Natural killer cell (primary cell): ENCODE measurements at regions of chr4 and their contacts with region 1.

Region 1: GRCh38 chr4:153573881-153574802 is 108.0 kb downstream of the TMEM131L start:
- DNase-seq: peak; percentile 42 to 82
- ATAC-seq: peak; percentile 86 to 96 (median 95)
- H3K4me3 ChIP-seq: no peak overlapping the region
- H3K4me3 Mint-ChIP-seq: no peak overlapping the region
- H3K27ac ChIP-seq: peak overlapping the region; percentile 44
- H3K27ac Mint-ChIP-seq: peak overlapping the region; percentile 25 to 71
- H3K4me1 ChIP-seq: peaks cover 15% of the 10 kb centered on the region
- H3K4me1 Mint-ChIP-seq: peaks cover 38 to 52% of the 10 kb centered on the region in 2 donors
- H3K27me3 ChIP-seq: no peaks in the 10 kb centered on the region
- H3K27me3 Mint-ChIP-seq: no peaks in the 10 kb centered on the region
- CTCF ChIP-seq: peak; percentile 67

Region 2: GRCh38 chr4:153432968-153433753 is 141.0 kb before region 1 on chr4:
- intact Hi-C with region 1: loop called (anchors 1 kb)
- DNase-seq: peak; percentile 52 to 86
- ATAC-seq: peak; percentile 92 to 97 (median 94)
- H3K4me3 ChIP-seq: peak overlapping the region; percentile 2
- H3K4me3 Mint-ChIP-seq: peak overlapping the region; percentile 96
- H3K27ac ChIP-seq: peak overlapping the region; percentile 74
- H3K27ac Mint-ChIP-seq: peak overlapping the region; percentile 85 to 98
- H3K4me1 ChIP-seq: peaks cover 30% of the 10 kb centered on the region
- H3K4me1 Mint-ChIP-seq: peaks cover 13 to 14% of the 10 kb centered on the region in 2 donors
- H3K27me3 ChIP-seq: no peaks in the 10 kb centered on the region
- H3K27me3 Mint-ChIP-seq: no peaks in the 10 kb centered on the region
- CTCF ChIP-seq: peak; percentile 66